ENCODE measurements at regions of chr19 and their contacts with region 1.

Region 1: DNA sequence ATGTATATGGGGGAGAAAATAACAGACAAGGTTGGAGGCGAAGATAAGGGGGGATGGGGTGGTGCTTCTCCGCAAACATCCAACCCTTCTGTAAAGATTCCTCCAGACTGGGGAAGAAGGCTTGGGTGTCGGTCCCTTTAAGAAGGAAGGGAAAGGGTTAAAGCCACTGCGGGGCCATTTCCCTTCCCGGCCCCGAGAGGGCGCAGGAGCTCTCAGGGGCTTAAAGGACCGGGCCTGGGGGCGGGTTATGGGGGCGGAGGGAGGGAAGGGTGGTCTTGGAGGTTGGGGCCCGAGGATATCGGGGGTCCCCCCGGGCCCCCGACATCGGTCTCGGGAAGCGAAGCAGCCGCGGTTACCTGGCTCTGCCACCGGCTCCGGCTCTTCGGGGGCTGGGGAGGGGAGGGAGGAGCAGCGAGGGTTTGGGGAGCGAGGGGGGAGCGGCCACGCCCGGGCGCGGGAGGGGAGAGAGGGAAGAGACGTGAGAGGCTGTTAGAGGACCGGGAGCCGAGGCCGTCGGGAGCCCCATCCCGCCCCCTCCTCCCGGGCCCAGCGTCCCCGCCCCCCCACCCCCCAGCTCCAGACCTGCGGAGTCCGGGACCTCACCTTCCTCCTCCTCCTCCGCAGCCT is 2.8 kb downstream of the TNNT1 start:
- DNase-seq: no peak
- ATAC-seq: no peak
- H3K4me3 ChIP-seq: no peak overlapping the region
- H3K4me3 Mint-ChIP-seq: peak overlapping the region in 1 of 10 donors; percentile 28
- H3K27ac ChIP-seq: no peak overlapping the region
- H3K27ac Mint-ChIP-seq: no peak overlapping the region
- H3K4me1 ChIP-seq: no peaks in the 10 kb centered on the region
- H3K4me1 Mint-ChIP-seq: peaks cover under 1 to 14% (median 8%) of the 10 kb centered on the region in 7 donors
- H3K27me3 ChIP-seq: peaks cover 10 to 11% of the 10 kb centered on the region in 2 donors
- H3K27me3 Mint-ChIP-seq: peaks cover 49 to 65% (median 52%) of the 10 kb centered on the region in 5 donors

Region 2: GRCh38 chr19:54851353-54851752 is 294.8 kb before region 1 on chr19:
- CTCF ChIA-PET with region 1: no interaction called
- POLR2A ChIA-PET with region 1: no interaction called
- intact Hi-C with region 1: no loop called
- DNase-seq: no peak
- ATAC-seq: peak; percentile 48
- H3K4me3 ChIP-seq: no peak overlapping the region
- H3K4me3 Mint-ChIP-seq: no peak overlapping the region
- H3K27ac ChIP-seq: no peak overlapping the region
- H3K27ac Mint-ChIP-seq: no peak overlapping the region
- H3K4me1 ChIP-seq: no peaks in the 10 kb centered on the region
- H3K4me1 Mint-ChIP-seq: peaks cover 0 to 9% (median 0%) of the 10 kb centered on the region in 7 donors
- H3K27me3 ChIP-seq: no peaks in the 10 kb centered on the region
- H3K27me3 Mint-ChIP-seq: peaks cover 0 to 56% (median 23%) of the 10 kb centered on the region in 5 donors

Region 3: GRCh38 chr19:55099533-55100506 is 46.4 kb before region 1 on chr19:
- CTCF ChIA-PET with region 1: no interaction called
- POLR2A ChIA-PET with region 1: no interaction called
- intact Hi-C with region 1: no loop called
- DNase-seq: no peak
- ATAC-seq: no peak
- H3K4me3 ChIP-seq: no peak overlapping the region
- H3K4me3 Mint-ChIP-seq: no peak overlapping the region
- H3K27ac ChIP-seq: no peak overlapping the region
- H3K27ac Mint-ChIP-seq: no peak overlapping the region
- H3K4me1 ChIP-seq: no peaks in the 10 kb centered on the region
- H3K4me1 Mint-ChIP-seq: peaks cover 0 to 3% (median 0%) of the 10 kb centered on the region in 7 donors
- H3K27me3 ChIP-seq: no peaks in the 10 kb centered on the region
- H3K27me3 Mint-ChIP-seq: no peaks in the 10 kb centered on the region

Region 4: DNA sequence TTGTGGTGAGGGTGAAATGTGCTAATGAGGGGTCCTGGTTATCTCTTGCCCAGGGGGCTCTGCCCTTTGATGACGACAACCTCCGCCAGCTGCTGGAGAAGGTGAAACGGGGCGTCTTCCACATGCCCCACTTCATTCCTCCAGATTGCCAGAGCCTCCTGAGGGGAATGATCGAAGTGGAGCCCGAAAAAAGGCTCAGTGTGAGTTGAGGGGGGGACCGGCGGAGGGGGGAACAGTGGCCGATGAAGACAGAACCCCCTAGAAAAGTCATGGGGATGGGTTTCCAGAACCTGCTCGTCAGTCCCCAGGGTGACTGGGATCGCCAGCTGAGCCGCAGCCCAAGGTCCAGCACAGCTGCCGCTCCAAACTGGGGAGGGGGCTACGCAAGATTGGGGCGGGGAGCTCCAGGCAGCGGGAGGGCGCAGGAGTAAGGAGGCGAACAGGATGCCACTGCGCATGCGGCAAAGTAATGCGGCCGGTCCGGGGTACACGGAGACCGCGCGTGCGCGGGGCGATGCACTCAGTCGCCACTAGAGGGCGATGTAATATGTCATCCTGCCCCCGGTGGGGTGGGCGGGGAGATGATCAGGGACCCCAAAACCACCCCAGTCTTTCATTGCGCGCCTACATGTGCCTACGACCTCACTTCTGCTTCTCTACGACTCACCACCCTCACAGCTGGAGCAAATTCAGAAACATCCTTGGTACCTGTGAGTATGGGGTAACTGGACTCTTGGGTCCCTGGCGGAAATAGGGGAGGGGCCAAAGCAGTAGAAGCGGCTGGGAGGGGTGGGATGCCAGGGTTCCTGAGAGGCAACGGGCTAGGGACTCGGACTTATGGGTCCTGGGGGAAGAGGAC is 155.5 kb after region 1 on chr19:
- CTCF ChIA-PET with region 1: no interaction called
- POLR2A ChIA-PET with region 1: no interaction called
- intact Hi-C with region 1: loop called in 1 of 2 experiments (anchors 10 kb)
- DNase-seq: peak; percentile 84 to 97 (median 91)
- ATAC-seq: peak; percentile 97
- H3K4me3 ChIP-seq: peak overlapping the region; percentile 61
- H3K4me3 Mint-ChIP-seq: peak overlapping the region; percentile 77 to 97 (median 88)
- H3K27ac ChIP-seq: peak overlapping the region; percentile 66
- H3K27ac Mint-ChIP-seq: peak overlapping the region; percentile 66 to 95 (median 84)
- H3K4me1 ChIP-seq: peaks cover 5 to 10% of the 10 kb centered on the region in 2 donors
- H3K4me1 Mint-ChIP-seq: peaks cover 0 to 17% (median 11%) of the 10 kb centered on the region in 7 donors
- H3K27me3 ChIP-seq: no peaks in the 10 kb centered on the region
- H3K27me3 Mint-ChIP-seq: peaks cover 0 to 3% (median 0%) of the 10 kb centered on the region in 5 donors

Measured in naive thymus-derived CD4-positive, alpha-beta T cell (primary cell).